ENCODE measurements at regions of chr14 and their contacts with region 1.

Region 1: GRCh38 chr14:20799892-20800544 is 2.6 kb downstream of the RNASE1 start:
- DNase-seq: peak; percentile 90
- H3K4me3 ChIP-seq: peak overlapping the region in 2 of 3 experiments; percentile 32
- H3K27ac ChIP-seq: peak overlapping the region; percentile 82
- H3K4me1 ChIP-seq: peaks cover 46% of the 10 kb centered on the region
- H3K27me3 ChIP-seq: no peaks in the 10 kb centered on the region
- CTCF ChIP-seq: no peak
- POLR2A ChIP-seq: no peak

Region 2: GRCh38 chr14:20697273-20698017 is 102.6 kb before region 1 on chr14:
- CTCF ChIA-PET with region 1: interaction called, 5 read pairs
- POLR2A ChIA-PET with region 1: no interaction called
- dilution Hi-C with region 1: no loop called
- intact Hi-C with region 1: loop called (anchors 1 kb)
- DNase-seq: peak; percentile 89
- H3K4me3 ChIP-seq: no peak overlapping the region
- H3K27ac ChIP-seq: peak overlapping the region; percentile 30
- H3K4me1 ChIP-seq: peaks cover 11% of the 10 kb centered on the region
- H3K27me3 ChIP-seq: no peaks in the 10 kb centered on the region
- CTCF ChIP-seq: peak; percentile 73 to 90
- POLR2A ChIP-seq: no peak

Region 3: DNA sequence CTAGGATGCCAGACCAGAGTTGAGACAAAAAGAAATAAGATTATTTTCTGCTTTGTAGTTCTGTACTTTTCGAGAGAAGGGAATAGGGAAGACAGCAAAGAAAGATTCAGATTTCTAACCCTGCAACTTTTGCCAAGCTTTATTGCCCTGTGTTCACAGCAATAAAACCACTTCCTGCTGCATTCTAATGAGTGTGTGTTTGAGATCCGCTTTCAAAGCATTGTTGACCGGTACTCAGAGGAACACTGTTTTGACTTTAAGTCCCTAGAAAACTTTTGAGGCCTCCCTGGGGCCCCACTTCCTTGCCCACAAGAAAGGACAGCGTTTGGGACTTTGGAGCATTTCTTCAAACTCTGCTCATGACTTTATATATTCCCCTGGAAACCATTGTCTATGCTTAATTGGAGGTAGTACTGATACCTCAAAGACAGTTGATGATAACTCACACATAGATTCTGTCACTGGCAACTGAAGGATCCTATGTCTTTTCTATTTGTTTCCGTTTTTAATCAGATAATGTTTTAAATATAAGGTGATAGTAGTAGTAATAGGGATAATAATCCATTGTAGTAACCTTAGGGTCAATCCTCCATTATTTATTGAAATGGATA is 17.6 kb before region 1 on chr14:
- CTCF ChIA-PET with region 1: interaction called, 20 read pairs
- POLR2A ChIA-PET with region 1: interaction called, 7 read pairs
- dilution Hi-C with region 1: no loop called
- intact Hi-C with region 1: loop called (anchors 1 kb)
- DNase-seq: peak; percentile 56
- H3K4me3 ChIP-seq: peak overlapping the region in 1 of 3 experiments; percentile 35
- H3K27ac ChIP-seq: no peak overlapping the region
- H3K4me1 ChIP-seq: peaks cover 20% of the 10 kb centered on the region
- H3K27me3 ChIP-seq: peaks cover 2 to 9% of the 10 kb centered on the region in 2 experiments
- CTCF ChIP-seq: no peak
- POLR2A ChIP-seq: no peak

Region 4: GRCh38 chr14:20830831-20831230 is 30.8 kb after region 1 on chr14:
- CTCF ChIA-PET with region 1: interaction called, 3 read pairs
- POLR2A ChIA-PET with region 1: no interaction called
- dilution Hi-C with region 1: no loop called
- intact Hi-C with region 1: loop called (anchors 1 kb)
- DNase-seq: no peak
- H3K4me3 ChIP-seq: no peak overlapping the region
- H3K27ac ChIP-seq: no peak overlapping the region
- H3K4me1 ChIP-seq: peaks cover 9% of the 10 kb centered on the region
- H3K27me3 ChIP-seq: no peaks in the 10 kb centered on the region
- CTCF ChIP-seq: no peak
- POLR2A ChIP-seq: no peak

Measured in endothelial cell of umbilical vein (primary cell).